Left ventricle myocardium superior (tissue), 1 donor: ENCODE measurements at regions of chr9 and their contacts with region 1.

Region 1: GRCh38 chr9:91681461-91682305 is 258.1 kb upstream of the NFIL3 start:
- DNase-seq: peak; percentile 88
- ATAC-seq: peak; percentile 98

Region 2: DNA sequence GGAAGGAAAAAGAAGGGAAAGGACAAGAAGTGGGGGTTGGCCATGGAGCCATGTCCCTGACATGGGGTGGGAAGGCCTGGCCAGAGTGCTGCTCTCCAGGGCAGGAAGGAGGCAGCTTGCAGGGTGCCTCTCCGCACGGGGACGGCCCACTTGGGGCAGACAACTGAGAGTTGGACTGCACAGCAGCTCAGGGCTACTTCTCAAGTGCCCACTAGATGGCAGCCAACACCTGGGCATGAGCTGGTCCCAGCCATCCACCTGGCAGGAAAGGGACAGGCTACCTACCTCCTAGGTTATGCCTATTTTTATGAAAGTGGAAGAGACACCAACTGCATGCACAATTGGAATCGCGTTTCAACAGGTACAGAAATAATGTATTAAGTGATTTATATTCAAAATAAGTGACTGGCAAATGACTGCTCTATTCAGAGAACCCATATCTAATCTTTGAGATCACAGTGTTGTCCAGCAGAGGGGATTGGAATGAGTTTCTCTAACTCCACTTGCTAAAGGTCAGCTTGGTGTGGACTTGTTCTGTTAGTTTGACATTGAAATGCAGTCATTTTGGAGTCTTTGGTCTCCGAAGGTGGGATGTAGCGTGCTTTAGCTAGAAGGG is 766.7 kb before region 1 on chr9:
- intact Hi-C with region 1: loop called (anchors 10 kb)
- DNase-seq: peak; percentile 74
- ATAC-seq: peak; percentile 90

Region 3: DNA sequence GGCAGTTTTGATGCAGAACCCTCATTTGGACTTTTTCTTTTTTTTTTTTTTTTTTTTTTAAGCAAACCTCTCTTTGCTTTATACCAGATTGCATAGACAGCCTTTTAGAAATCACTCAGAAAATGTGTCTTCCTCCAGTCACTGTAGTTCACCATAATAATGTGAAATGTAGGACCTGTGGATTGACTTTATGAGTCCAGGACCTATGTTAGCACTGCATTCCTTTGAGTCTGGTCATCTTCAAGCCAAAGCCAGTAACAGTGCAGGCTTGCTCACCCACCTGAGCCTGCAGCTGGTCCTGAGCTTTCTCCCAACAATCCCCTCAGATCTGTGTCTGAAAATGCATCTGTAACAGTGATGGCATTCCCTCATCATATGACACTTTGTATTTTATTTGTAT is 147.3 kb before region 1 on chr9:
- intact Hi-C with region 1: no loop called
- DNase-seq: no peak
- ATAC-seq: no peak

Region 4: DNA sequence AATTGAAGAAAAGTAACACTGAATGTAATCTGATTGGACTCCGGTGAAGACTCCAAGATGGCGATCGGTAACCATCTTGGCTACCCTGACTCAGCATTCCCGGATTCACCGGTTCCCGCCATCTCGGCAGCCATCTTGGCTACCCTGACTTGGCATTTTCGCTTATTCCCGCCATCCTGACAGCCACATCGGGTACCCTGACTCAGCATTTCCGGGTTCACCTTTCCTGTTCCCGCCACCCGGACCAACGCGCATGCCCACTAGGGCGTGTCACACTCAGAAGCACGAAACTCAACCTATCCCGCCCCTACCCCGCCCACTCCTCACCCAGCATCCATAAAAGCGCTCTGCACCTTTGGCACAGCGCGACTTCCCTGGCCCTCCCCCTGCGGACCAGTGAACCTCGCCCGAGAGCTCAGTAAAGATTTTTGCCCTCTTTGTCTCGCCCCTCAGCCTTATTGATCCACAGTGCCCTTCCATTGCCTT is 416.4 kb after region 1 on chr9:
- intact Hi-C with region 1: no loop called
- DNase-seq: peak; percentile 77
- ATAC-seq: peak; percentile 76